ENCODE measurements at regions of chr19 and their contacts with region 1.

Region 1: DNA sequence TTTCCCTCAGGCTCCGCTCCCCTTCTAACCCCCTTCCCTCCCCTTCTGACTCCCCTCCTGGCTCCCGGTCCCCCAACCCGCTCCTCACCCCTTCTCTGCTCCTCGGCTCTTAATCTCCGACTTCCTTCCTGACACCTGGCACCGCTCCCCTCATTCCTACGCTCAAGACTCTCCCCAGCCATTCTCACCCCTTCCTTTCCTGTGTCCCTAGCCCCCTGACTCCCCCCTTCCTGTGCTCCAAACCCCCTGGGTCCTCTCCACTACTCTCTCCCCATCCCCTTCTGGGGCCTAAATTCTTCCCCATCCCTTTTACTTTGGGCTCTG is 658 bp downstream of the CLPP start:
- DNase-seq: no peak
- ATAC-seq: no peak
- H3K4me3 ChIP-seq: peak overlapping the region; percentile 76
- H3K4me3 Mint-ChIP-seq: peak overlapping the region; percentile 83 to 100 (median 97)
- H3K27ac ChIP-seq: peak overlapping the region; percentile 82
- H3K27ac Mint-ChIP-seq: peak overlapping the region; percentile 87 to 98 (median 96)
- H3K4me1 ChIP-seq: peaks cover 10 to 13% of the 10 kb centered on the region in 2 donors
- H3K4me1 Mint-ChIP-seq: peaks cover 10 to 37% (median 22%) of the 10 kb centered on the region in 7 donors
- H3K27me3 ChIP-seq: no peaks in the 10 kb centered on the region
- H3K27me3 Mint-ChIP-seq: no peaks in the 10 kb centered on the region

Region 2: DNA sequence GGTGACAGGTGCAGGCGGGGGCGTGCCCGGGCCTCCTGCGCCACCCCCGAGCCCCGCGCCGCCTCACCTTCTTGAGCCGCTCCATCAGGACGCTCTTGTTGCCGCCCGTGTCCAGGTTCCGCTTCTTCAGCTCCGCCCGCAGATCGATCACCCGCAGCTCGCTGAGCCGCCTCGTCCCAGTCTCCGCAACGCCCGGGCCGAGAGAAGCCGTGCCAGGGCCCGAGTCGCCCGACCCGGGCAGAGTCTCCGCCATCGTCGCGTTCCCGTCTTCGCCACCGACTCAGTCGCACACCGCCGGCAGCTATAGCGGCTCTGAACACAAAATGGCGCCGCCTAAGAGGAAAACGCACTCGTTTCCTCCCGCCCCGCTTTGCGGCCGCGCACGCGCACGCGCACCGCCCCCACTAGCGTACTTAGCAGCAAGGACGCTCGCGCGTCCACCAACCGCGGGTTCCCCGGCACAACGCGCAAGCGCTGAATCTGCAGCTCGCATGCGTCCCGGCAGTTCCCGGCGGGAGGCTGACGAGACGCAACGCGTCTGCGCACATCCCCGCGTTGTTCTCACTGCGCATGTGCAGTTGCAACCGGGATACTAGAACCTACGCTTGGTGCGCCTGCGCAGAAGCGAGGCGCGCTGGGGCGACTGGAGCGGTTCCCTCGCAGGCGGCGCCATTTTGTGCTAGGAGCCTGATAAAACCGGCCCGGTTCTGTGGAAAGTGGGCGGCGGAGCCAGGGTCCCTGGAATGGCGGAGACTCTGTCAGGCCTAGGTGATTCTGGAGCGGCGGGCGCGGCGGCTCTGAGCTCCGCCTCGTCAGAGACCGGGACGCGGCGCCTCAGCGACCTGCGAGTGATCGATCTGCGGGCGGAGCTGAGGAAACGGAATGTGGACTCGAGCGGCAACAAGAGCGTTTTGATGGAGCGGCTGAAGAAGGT is 739.3 kb before region 1 on chr19 and contains the starts of genes SAFB and SAFB2:
- CTCF ChIA-PET with region 1: no interaction called
- POLR2A ChIA-PET with region 1: no interaction called
- intact Hi-C with region 1: loop called in 1 of 2 experiments (anchors 5 kb)
- DNase-seq: peak; percentile 96 to 100 (median 100)
- ATAC-seq: peak; percentile 91
- H3K4me3 ChIP-seq: peak within 1 kb of the TSS; percentile 91
- H3K4me3 Mint-ChIP-seq: peak within 1 kb of the TSS; percentile 97 to 100 (median 100)
- H3K27ac ChIP-seq: peak within 1 kb of the TSS; percentile 97
- H3K27ac Mint-ChIP-seq: peak within 1 kb of the TSS; percentile 99 to 100 (median 100)
- H3K4me1 ChIP-seq: peaks cover 54 to 66% of the 10 kb centered on the region in 2 donors
- H3K4me1 Mint-ChIP-seq: peaks cover 52 to 79% (median 70%) of the 10 kb centered on the region in 7 donors
- H3K27me3 ChIP-seq: no peaks in the 10 kb centered on the region
- H3K27me3 Mint-ChIP-seq: peaks cover 0 to 5% (median 0%) of the 10 kb centered on the region in 5 donors
- total RNA-seq, gene SAFB: 141 to 203 (median 174) TPM
- total RNA-seq, gene SAFB2: 112 to 250 (median 243) TPM

Region 3: GRCh38 chr19:6199240-6199983 is 162.6 kb before region 1 on chr19:
- CTCF ChIA-PET with region 1: no interaction called
- POLR2A ChIA-PET with region 1: no interaction called
- intact Hi-C with region 1: loop called in 1 of 2 experiments (anchors 1 kb)
- DNase-seq: peak; percentile 97 to 100 (median 99)
- ATAC-seq: peak; percentile 93
- H3K4me3 ChIP-seq: peak overlapping the region; percentile 97
- H3K4me3 Mint-ChIP-seq: peak overlapping the region; percentile 92 to 99 (median 95)
- H3K27ac ChIP-seq: peak overlapping the region; percentile 70
- H3K27ac Mint-ChIP-seq: peak overlapping the region; percentile 89 to 97 (median 91)
- H3K4me1 ChIP-seq: peaks cover 6% of the 10 kb centered on the region in 2 donors
- H3K4me1 Mint-ChIP-seq: peaks cover 5 to 20% (median 18%) of the 10 kb centered on the region in 7 donors
- H3K27me3 ChIP-seq: no peaks in the 10 kb centered on the region
- H3K27me3 Mint-ChIP-seq: peaks cover 0 to 8% (median 4%) of the 10 kb centered on the region in 5 donors

Region 4: GRCh38 chr19:6393074-6393983 is 31.3 kb after region 1 on chr19 and contains the start of gene GTF2F1:
- CTCF ChIA-PET with region 1: interaction called, 3 read pairs
- POLR2A ChIA-PET with region 1: interaction called, 11 read pairs
- intact Hi-C with region 1: loop called (anchors 1 kb)
- DNase-seq: peak; percentile 87 to 96 (median 92)
- ATAC-seq: peak; percentile 88
- H3K4me3 ChIP-seq: peak within 1 kb of the TSS; percentile 81
- H3K4me3 Mint-ChIP-seq: peak within 1 kb of the TSS; percentile 90 to 95 (median 94)
- H3K27ac ChIP-seq: peak within 1 kb of the TSS; percentile 98
- H3K27ac Mint-ChIP-seq: peak within 1 kb of the TSS; percentile 95 to 99 (median 97)
- H3K4me1 ChIP-seq: peaks cover 8 to 12% of the 10 kb centered on the region in 2 donors
- H3K4me1 Mint-ChIP-seq: peaks cover 20 to 27% (median 25%) of the 10 kb centered on the region in 7 donors
- H3K27me3 ChIP-seq: no peaks in the 10 kb centered on the region
- H3K27me3 Mint-ChIP-seq: no peaks in the 10 kb centered on the region
- total RNA-seq, gene GTF2F1: 51.5 to 71.6 (median 61.3) TPM

Region 5: GRCh38 chr19:6503407-6504201 is 141.6 kb after region 1 on chr19:
- CTCF ChIA-PET with region 1: interaction called, 6 read pairs
- POLR2A ChIA-PET with region 1: no interaction called
- intact Hi-C with region 1: loop called in 1 of 2 experiments (anchors 2 kb)
- DNase-seq: no peak
- ATAC-seq: no peak
- H3K4me3 ChIP-seq: no peak overlapping the region
- H3K4me3 Mint-ChIP-seq: peak overlapping the region in 9 of 10 donors; percentile 7 to 93 (median 66)
- H3K27ac ChIP-seq: no peak overlapping the region
- H3K27ac Mint-ChIP-seq: peak overlapping the region in 2 of 9 donors; percentile 27 to 71
- H3K4me1 ChIP-seq: peaks cover 7 to 8% of the 10 kb centered on the region in 2 donors
- H3K4me1 Mint-ChIP-seq: peaks cover 6 to 22% (median 19%) of the 10 kb centered on the region in 7 donors
- H3K27me3 ChIP-seq: no peaks in the 10 kb centered on the region
- H3K27me3 Mint-ChIP-seq: peaks cover 0 to 26% (median 0%) of the 10 kb centered on the region in 5 donors

Measured in naive thymus-derived CD4-positive, alpha-beta T cell (primary cell).